OCI-LY7 (cell line): ENCODE measurements at regions of chr17 and their contacts with region 1.

Region 1: DNA sequence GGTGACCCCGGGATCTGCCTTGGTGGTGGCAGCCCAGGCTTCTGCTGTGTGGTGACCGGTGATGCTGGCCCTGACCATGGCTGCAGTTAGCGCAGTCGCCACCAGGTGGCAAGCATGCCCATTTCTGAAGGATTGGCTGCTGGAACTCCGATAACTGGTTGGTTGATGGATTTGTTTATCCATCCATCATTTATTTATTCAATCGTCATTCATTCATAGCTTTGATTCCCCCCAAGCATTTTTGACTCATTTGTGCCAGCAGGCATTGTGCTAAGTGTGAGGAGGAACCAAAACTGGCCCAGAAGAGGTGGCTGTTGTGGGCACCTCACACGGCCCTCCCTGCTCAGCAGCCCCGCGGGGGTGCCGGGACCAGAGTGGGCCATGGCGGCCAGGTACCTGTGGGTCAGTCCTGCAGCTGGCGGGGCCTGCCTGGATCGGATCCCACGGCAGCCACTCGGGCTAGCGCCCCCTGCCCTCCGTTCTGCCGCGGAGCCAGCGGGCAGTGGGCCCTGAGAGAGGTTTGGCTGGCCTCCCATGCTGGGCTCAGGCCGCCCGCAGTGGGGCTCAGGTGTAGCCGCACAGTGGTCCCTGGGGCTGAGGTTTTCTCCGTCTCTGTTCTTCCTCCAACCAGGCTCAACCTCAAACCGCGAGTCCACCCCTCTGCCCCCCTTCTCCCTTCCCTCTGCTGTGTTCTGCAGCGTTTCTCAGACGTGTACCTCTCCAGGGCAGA is 28.8 kb upstream of the ITGA3 start:
- DNase-seq: peak; percentile 64
- H3K4me3 ChIP-seq: no peak overlapping the region
- H3K27ac ChIP-seq: no peak overlapping the region
- H3K4me1 ChIP-seq: peaks cover 4% of the 10 kb centered on the region
- CTCF ChIP-seq: peak; percentile 96

Region 2: DNA sequence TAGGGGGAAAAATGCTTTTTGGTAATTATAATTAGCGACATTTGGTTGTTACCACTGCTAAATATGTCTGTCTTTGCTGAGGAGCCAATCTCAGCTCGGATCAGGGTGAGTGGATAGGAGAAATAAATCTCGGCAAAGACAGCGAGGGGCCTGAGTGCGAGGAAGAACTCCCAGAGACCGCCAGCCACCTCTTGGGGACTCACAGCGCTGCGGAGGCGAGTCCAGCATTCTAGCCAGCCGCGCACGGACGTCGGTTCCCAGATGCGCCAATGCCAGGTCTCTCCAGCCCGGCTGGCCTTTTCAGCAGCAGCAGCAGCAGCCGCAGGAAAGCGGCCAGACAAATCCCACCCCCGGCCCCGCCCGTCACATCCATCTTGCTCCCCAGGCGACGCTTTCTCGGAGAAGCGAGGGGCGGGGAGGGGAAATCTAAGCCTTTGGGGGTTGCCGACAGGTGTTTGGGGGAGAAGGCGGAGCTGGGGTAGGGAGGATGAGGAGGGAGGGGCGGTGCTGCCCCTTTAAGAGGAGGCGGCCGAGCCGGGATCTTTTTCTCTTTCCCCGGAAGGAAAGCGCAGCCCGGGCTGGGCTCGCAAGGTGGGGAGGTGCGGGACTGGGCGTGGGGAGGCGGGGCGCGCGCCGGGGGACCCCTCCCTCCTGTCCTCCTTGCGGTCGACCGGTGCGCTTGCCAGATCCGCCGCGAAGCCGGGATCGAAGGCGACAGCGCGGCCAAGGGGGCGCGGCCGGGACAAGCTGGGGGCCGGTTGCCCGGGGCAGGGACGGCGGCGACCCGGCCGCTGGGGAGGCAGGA is 28.6 kb after region 1 on chr17 and contains the start of gene ITGA3:
- CTCF ChIA-PET with region 1: no interaction called
- POLR2A ChIA-PET with region 1: interaction called, 3 read pairs
- intact Hi-C with region 1: loop called (anchors 1 kb)
- DNase-seq: peak; percentile 78
- H3K4me3 ChIP-seq: peak within 1 kb of the TSS; percentile 83
- H3K27ac ChIP-seq: peak within 1 kb of the TSS; percentile 67
- H3K4me1 ChIP-seq: peaks cover 64% of the 10 kb centered on the region
- CTCF ChIP-seq: no peak
- total RNA-seq, gene ITGA3: 23.2 and 30.7 TPM in 2 replicates